HCT116 (cell line): ENCODE measurements at regions of chr1 and their contacts with region 1.

Region 1: GRCh38 chr1:23809751-23810171 is 9.2 kb upstream of the GALE start:
- DNase-seq: peak; percentile 41
- ATAC-seq: peak; percentile 93
- H3K4me3 ChIP-seq: no peak overlapping the region
- H3K27ac ChIP-seq: no peak overlapping the region
- H3K4me1 ChIP-seq: peaks cover 6 to 15% of the 10 kb centered on the region in 2 experiments; a peak in 2 of 4 replicates
- H3K27me3 ChIP-seq: no peaks in the 10 kb centered on the region
- CTCF ChIP-seq: peak; percentile 77 to 93 (median 88)
- POLR2A ChIP-seq: no peak
- RAD21 ChIP-seq: peak; percentile 84

Region 2: DNA sequence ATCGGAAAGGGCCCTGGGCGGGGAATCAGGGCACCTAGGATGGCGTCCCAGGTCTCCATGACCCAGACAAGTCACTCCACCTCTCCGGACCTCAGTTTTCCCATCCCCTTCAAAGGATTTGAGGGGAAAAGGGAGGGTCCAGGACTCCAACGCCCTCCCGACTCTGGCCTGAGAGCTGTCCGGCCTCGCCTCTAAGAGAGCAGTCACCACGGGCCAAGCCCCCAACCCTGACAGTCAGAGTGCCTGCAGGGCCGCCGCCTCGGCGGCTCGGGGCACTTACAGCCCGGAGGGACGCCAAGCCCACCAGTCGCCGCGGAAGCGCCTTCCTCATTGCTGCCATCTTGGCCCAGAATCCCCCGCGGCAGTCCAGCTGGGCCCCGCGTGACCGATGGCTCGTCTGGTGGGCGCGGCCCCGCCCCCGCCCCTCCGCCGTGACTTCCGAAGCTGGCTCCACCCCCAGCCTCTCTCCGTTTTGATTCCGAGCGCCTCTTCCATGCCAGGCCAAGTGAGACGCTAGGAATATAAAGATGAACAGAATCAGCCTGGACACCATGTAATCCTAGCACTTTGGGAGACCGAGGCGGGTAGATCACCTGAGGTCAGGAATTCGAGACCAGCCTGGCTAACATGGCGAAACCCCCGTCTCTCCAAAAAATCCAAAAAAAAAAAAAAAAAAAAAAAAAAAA is 15.5 kb after region 1 on chr1 and contains the start of gene HMGCL:
- CTCF ChIA-PET with region 1: interaction called, 16 read pairs
- POLR2A ChIA-PET with region 1: no interaction called
- RAD21 ChIA-PET with region 1: no interaction called
- intact Hi-C with region 1: no loop called
- DNase-seq: peak; percentile 58
- ATAC-seq: peak; percentile 95
- H3K4me3 ChIP-seq: peak within 1 kb of the TSS; percentile 81 to 99
- H3K27ac ChIP-seq: peak within 1 kb of the TSS; percentile 75
- H3K4me1 ChIP-seq: peaks cover 2 to 15% of the 10 kb centered on the region in 2 experiments; a peak in 3 of 4 replicates
- H3K27me3 ChIP-seq: no peaks in the 10 kb centered on the region
- CTCF ChIP-seq: no peak
- POLR2A ChIP-seq: peak; percentile 69
- RAD21 ChIP-seq: no peak
- total RNA-seq, gene HMGCL: 36.2 TPM

Region 3: DNA sequence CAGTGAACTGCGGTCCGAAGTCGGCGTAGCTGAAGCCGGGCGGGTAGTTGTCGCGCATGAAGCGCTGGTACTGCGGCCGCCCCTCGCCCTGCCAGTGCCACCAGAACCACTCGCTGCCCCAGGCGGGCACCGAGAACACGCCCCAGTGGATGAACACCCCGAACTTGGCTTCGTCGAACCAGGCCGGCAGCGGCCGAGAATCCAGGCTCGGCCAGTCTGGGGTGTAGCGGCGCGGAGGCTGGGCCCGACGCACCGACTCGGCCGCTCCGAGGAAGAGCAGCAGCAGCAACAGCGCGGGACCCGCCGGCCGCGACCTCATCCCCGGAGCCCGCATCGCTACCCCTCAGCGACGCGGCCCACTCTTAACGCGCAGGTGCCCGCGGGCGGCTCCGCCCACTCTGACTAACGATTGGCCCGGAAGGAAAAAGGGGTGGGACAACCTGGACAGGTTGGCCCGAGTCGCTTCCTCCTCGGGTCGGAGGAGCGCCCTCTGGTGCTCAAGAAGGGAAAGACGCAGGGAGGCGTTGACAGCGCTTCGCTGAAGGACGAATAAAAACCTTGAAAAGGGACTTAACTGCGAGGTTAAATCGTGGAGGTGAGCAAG is 58.3 kb after region 1 on chr1 and contains the start of gene FUCA1:
- CTCF ChIA-PET with region 1: no interaction called
- POLR2A ChIA-PET with region 1: no interaction called
- RAD21 ChIA-PET with region 1: no interaction called
- intact Hi-C with region 1: loop called (anchors 2 kb)
- DNase-seq: peak; percentile 90
- ATAC-seq: peak; percentile 94
- H3K4me3 ChIP-seq: peak within 1 kb of the TSS; percentile 74 to 83
- H3K27ac ChIP-seq: peak within 1 kb of the TSS; percentile 63; the same call in 1 of the 2 replicates
- H3K4me1 ChIP-seq: peaks cover 34 to 39% of the 10 kb centered on the region in 2 experiments
- H3K27me3 ChIP-seq: no peaks in the 10 kb centered on the region
- CTCF ChIP-seq: peak; percentile 84 to 91 (median 85)
- POLR2A ChIP-seq: peak; percentile 55
- RAD21 ChIP-seq: peak; percentile 74
- total RNA-seq, gene FUCA1: 20.7 TPM

Region 4: DNA sequence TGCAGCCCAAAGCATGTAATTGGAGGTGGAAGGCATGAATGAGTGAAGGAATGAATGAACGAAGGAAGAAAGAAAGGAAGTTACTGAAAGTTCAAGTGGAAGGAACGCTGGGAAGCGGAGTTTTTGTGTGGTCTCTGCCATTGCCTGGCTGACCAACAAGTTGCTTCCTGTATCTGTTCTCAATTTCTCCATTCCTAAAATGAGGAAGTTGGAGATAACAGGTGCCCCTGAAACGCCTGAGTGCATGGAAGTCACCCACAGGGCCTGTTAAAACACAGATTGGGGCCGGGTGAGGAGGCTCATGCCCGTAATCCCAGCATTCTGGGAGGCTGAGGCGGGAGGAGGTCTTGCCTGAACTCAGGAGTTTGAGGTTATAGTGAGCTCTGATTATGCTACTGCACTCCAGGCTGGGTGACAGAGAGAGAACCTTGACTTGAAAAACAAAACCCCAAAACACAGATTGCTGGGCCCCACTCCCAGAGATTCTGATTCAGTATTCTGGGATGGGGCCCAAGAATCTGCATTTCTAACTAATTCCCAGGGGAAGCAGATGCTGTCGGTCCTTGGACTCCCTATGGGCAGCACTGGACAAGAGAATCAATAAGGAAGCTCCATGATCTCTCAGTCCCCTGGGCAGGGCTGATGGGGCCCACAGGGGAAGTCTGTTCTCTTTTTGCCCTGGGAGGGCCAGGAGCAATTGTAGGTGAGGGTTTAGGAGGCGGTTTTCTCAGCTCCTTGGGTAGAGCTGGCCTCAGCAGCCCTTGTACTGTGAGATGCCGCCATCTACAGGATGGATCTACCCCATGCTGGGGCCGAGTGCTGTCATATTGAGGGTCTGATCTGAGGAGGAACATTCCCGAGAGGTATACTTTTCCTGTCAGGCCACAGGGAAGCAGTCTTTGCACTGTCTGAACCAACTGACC is 106.7 kb after region 1 on chr1:
- CTCF ChIA-PET with region 1: interaction called, 21 read pairs
- POLR2A ChIA-PET with region 1: interaction called, 4 read pairs
- RAD21 ChIA-PET with region 1: interaction called, 5 to 11 read pairs
- intact Hi-C with region 1: no loop called
- DNase-seq: peak; percentile 81
- ATAC-seq: peak; percentile 97
- H3K4me3 ChIP-seq: no peak overlapping the region
- H3K27ac ChIP-seq: no peak overlapping the region
- H3K4me1 ChIP-seq: peaks cover 12 to 38% of the 10 kb centered on the region in 2 experiments
- H3K27me3 ChIP-seq: no peaks in the 10 kb centered on the region
- CTCF ChIP-seq: peak; percentile 80 to 82 (median 82)
- POLR2A ChIP-seq: no peak
- RAD21 ChIP-seq: peak; percentile 94